AG04450 (cell line): ENCODE measurements at regions of chr3 and their contacts with region 1.

Region 1: GRCh38 chr3:99499235-99500158 is 138.9 kb upstream of the COL8A1 start:
- DNase-seq: no peak
- H3K4me3 ChIP-seq: no peak overlapping the region
- H3K27ac ChIP-seq: no peak overlapping the region
- H3K27me3 ChIP-seq: no peaks in the 10 kb centered on the region
- CTCF ChIP-seq: peak; percentile 89

Region 2: GRCh38 chr3:99419116-99419515 is 80.4 kb before region 1 on chr3:
- CTCF ChIA-PET with region 1: no interaction called
- POLR2A ChIA-PET with region 1: no interaction called
- DNase-seq: no peak
- H3K4me3 ChIP-seq: no peak overlapping the region
- H3K27ac ChIP-seq: no peak overlapping the region
- H3K27me3 ChIP-seq: no peaks in the 10 kb centered on the region
- CTCF ChIP-seq: no peak

Region 3: GRCh38 chr3:99473321-99473751 is 26.2 kb before region 1 on chr3:
- CTCF ChIA-PET with region 1: no interaction called
- POLR2A ChIA-PET with region 1: no interaction called
- DNase-seq: no peak
- H3K4me3 ChIP-seq: no peak overlapping the region
- H3K27ac ChIP-seq: no peak overlapping the region
- H3K27me3 ChIP-seq: no peaks in the 10 kb centered on the region
- CTCF ChIP-seq: no peak

Region 4: GRCh38 chr3:99487894-99488293 is 11.6 kb before region 1 on chr3:
- CTCF ChIA-PET with region 1: interaction called, 10 read pairs
- POLR2A ChIA-PET with region 1: no interaction called
- DNase-seq: no peak
- H3K4me3 ChIP-seq: no peak overlapping the region
- H3K27ac ChIP-seq: no peak overlapping the region
- H3K27me3 ChIP-seq: no peaks in the 10 kb centered on the region
- CTCF ChIP-seq: no peak

Region 5: DNA sequence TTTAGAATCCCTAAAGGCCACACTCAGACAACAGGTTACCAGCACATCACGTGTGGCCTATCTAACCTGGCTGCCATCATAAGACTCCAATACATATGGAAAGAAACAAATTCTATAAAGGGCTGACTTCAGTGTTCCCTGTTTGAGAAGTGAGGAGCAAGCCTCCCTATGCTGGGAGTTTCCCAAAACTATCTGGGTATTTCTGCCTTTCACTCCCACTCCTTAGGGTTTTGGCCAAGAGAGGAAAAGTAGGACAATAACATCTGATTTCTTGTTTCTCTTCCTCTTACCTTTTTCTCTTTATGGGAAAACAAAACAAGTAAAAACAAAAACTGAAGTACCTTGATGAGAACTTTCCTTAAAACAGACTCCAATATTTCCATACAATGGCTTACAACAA is 17.4 kb after region 1 on chr3:
- CTCF ChIA-PET with region 1: no interaction called
- POLR2A ChIA-PET with region 1: no interaction called
- DNase-seq: no peak
- H3K4me3 ChIP-seq: no peak overlapping the region
- H3K27ac ChIP-seq: no peak overlapping the region
- H3K27me3 ChIP-seq: no peaks in the 10 kb centered on the region
- CTCF ChIP-seq: no peak

Region 6: GRCh38 chr3:99544786-99545281 is 45.3 kb after region 1 on chr3:
- CTCF ChIA-PET with region 1: no interaction called
- POLR2A ChIA-PET with region 1: no interaction called
- DNase-seq: no peak
- H3K4me3 ChIP-seq: no peak overlapping the region
- H3K27ac ChIP-seq: no peak overlapping the region
- H3K27me3 ChIP-seq: no peaks in the 10 kb centered on the region
- CTCF ChIP-seq: no peak